Activated CD4-positive, alpha-beta T cell treated with anti-CD3 and anti-CD28 coated beads, Interleukin-2, amount 10 ng/mL, durations not matched to agents 24 days and 14 days (primary cell): ENCODE measurements at regions of chr3 and their contacts with region 1.

Region 1: DNA sequence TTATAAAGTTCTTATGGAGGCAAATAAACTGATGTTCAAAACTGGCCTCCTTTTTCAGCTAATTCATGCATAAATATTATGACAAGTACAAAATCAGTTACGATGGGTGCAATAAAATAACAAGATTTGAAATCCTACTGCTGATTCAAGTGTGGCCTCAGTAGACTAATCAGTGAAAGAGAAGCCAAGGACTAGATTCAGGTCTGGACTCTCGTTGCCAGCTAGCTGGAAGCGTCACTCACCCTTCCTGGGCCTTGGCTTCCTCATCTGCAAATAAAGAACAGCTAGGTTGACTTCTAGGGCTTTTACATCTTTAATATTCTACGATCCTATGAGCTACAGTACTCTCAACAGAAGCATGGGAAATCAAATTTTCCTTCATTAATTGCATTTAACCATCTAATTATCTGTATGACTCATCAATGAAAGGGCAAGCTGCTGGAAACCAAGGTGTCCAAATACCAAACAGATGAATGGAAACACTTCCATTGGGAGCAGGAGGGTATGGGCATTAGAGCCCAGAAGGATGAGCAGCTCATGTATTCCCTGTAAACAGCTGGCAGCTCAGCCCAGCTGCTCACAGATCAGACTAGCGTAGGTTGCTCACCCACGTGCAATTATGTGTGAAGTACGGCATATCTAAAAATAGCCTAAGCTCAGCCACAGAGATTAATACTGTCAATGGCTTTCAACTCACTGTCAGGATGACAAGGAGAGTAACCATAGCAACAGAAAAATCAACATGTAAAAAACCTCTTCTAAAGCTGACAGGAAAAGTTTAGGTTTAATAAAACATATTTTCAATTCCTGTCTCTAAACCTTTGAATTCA is 294.8 kb downstream of the PLCL2 start:
- DNase-seq: peak; percentile 50
- H3K4me3 Mint-ChIP-seq: no peak overlapping the region
- H3K27ac Mint-ChIP-seq: no peak overlapping the region
- H3K4me1 Mint-ChIP-seq: peaks cover 27% of the 10 kb centered on the region
- H3K27me3 Mint-ChIP-seq: peaks cover 1% of the 10 kb centered on the region

Region 2: DNA sequence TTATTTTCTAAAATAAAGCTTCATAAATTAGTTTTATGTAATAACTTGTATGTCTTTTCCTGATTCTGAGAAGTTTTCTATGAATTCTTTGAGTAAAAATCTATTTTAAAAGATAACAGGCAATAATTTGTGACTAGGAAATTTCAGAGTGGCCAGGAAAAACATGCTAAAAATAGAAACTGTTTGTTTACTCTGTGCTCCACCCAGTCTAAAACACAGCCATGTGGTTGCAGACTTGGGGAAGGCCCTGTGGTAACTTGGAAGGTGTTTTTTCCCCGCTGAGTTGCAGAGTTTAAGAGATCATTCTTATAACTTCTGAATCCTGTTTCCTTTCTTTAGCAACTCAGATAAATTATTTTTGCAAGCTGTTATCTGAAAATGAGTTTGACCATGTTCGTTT is 272.9 kb before region 1 on chr3:
- intact Hi-C with region 1: loop called (anchors 5 kb)
- DNase-seq: peak; percentile 75
- H3K4me3 Mint-ChIP-seq: peak overlapping the region; percentile 38
- H3K27ac Mint-ChIP-seq: no peak overlapping the region
- H3K4me1 Mint-ChIP-seq: peaks cover 61% of the 10 kb centered on the region
- H3K27me3 Mint-ChIP-seq: no peaks in the 10 kb centered on the region

Region 3: GRCh38 chr3:17023006-17023664 is 156.5 kb before region 1 on chr3:
- intact Hi-C with region 1: loop called (anchors 2 kb)
- DNase-seq: peak; percentile 87
- H3K4me3 Mint-ChIP-seq: peak overlapping the region; percentile 61
- H3K27ac Mint-ChIP-seq: peak overlapping the region; percentile 88
- H3K4me1 Mint-ChIP-seq: peaks cover 52% of the 10 kb centered on the region
- H3K27me3 Mint-ChIP-seq: no peaks in the 10 kb centered on the region

Region 4: GRCh38 chr3:17140670-17141505 is 38.7 kb before region 1 on chr3:
- intact Hi-C with region 1: loop called (anchors 5 kb)
- DNase-seq: no peak
- H3K4me3 Mint-ChIP-seq: no peak overlapping the region
- H3K27ac Mint-ChIP-seq: no peak overlapping the region
- H3K4me1 Mint-ChIP-seq: peaks cover 25% of the 10 kb centered on the region
- H3K27me3 Mint-ChIP-seq: peaks cover 3% of the 10 kb centered on the region